Mammary epithelial cell (primary cell): ENCODE measurements at regions of chr7 and their contacts with region 1.

Region 1: GRCh38 chr7:65960351-65961074 is 21.5 kb downstream of the GUSB start:
- DNase-seq: no peak
- H3K4me3 ChIP-seq: no peak overlapping the region
- H3K27ac ChIP-seq: no peak overlapping the region
- H3K4me1 ChIP-seq: no peaks in the 10 kb centered on the region
- H3K27me3 ChIP-seq: no peaks in the 10 kb centered on the region
- CTCF ChIP-seq: no peak

Region 2: DNA sequence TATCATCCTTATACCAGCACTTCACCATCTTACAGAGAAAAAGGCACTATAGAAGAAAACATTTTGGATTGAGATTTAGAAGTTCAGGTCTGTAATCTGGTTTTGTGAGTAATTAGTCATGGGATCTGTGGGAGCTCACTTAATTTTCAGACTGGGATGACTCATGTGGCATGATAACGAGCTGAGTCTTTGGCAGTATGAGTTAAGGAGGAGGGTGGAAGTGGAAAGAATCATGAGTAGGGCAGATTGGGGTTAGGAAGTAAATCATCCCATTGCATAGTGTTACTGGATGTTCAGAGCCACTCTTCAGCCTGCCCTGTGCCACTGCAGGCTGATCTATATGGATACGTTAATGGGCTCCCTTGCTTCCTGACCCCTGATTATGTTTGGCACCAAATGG is 521.9 kb before region 1 on chr7:
- CTCF ChIA-PET with region 1: no interaction called
- dilution Hi-C with region 1: no loop called
- in situ Hi-C with region 1: no loop called
- intact Hi-C with region 1: no loop called
- DNase-seq: peak; percentile 96
- H3K4me3 ChIP-seq: no peak overlapping the region
- H3K27ac ChIP-seq: no peak overlapping the region
- H3K4me1 ChIP-seq: peaks cover 38% of the 10 kb centered on the region
- H3K27me3 ChIP-seq: no peaks in the 10 kb centered on the region
- CTCF ChIP-seq: no peak

Region 3: DNA sequence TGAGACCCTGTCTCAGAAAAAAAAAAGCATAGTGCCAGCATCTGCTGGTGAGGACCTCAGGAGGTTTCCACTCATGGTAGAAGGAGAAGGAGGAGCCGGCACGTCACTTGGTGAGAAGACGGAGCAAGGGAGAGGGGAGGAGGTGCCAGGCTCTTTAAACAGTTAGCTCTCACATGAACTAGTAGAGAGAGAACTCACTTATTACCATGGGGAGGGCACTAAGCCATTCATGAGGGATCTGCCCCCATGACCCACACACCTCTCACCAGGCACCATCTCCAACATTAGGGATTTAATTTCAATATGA is 150.6 kb before region 1 on chr7:
- CTCF ChIA-PET with region 1: no interaction called
- dilution Hi-C with region 1: loop called (anchors 10 kb)
- in situ Hi-C with region 1: no loop called
- intact Hi-C with region 1: no loop called
- DNase-seq: no peak
- H3K4me3 ChIP-seq: no peak overlapping the region
- H3K27ac ChIP-seq: no peak overlapping the region
- H3K4me1 ChIP-seq: no peaks in the 10 kb centered on the region
- H3K27me3 ChIP-seq: no peaks in the 10 kb centered on the region
- CTCF ChIP-seq: no peak

Region 4: GRCh38 chr7:65927489-65928448 is 32.7 kb before region 1 on chr7:
- CTCF ChIA-PET with region 1: no interaction called
- dilution Hi-C with region 1: loop called (anchors 5 kb)
- in situ Hi-C with region 1: no loop called
- intact Hi-C with region 1: no loop called
- DNase-seq: no peak
- H3K4me3 ChIP-seq: no peak overlapping the region
- H3K27ac ChIP-seq: no peak overlapping the region
- H3K4me1 ChIP-seq: no peaks in the 10 kb centered on the region
- H3K27me3 ChIP-seq: no peaks in the 10 kb centered on the region
- CTCF ChIP-seq: no peak